Left colon (tissue), 2 donors: ENCODE measurements at regions of chr6 and their contacts with region 1.

Region 1: DNA sequence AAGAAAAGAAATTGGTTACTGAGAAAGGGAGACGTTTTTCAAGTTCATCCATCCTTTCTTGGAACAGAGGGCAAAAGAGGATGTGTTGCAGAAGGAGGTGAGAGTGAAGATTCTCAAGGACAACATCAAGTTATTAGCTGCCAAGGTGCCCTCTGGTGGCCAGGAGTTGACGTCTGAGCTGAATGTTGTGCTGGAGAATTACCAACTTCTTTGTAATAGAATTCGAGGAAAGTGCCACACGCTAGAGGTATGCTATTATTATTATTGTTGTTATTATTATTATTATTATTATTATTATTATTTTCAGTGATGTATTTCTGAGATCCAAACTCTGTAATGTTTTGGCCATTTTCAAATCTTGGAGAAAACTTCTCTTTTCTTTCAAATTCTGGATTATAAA is 197.0 kb downstream of the UTRN start:
- DNase-seq: peak; percentile 68 to 89
- ATAC-seq: peak; percentile 85

Region 2: GRCh38 chr6:144104898-144105487 is 377.1 kb before region 1 on chr6:
- intact Hi-C with region 1: loop called in 1 of 2 experiments (anchors 5 kb)
- DNase-seq: no peak
- ATAC-seq: peak; percentile 69

Region 3: DNA sequence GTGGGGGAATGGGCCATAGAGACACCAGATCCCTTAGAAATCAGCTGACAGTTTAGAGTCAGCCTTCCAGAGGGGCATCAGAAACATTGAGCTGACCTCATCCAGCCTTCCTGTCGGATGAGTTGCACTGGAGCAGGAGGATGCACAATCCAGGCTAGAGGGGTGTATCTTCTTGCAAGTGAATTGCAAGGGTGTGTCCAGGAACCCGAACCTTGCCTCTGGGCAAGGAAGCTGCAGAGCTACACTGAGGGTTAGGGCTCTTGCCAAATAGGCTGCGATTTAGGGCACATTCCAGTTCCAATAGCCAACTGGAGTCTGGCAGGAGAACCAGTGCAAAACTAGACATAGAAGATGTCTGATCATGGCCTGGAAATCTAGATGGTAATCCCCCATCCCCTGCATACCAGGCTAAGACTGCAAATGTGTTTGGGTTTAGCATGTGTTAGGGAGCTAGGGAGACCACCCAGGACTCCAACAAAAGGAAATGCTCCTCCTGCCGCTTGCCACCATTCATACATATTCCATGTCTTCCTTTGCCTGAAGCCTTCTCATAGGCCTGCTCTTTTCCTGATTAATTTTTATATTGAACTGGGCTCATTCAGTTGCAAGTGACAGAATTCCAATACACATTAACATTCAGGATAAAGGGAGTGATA is 203.4 kb before region 1 on chr6:
- intact Hi-C with region 1: loop called in 1 of 2 experiments (anchors 10 kb)
- DNase-seq: no peak
- ATAC-seq: peak; percentile 91